Posterior vena cava (tissue), 2 donors: ENCODE measurements at regions of chr10 and their contacts with region 1.

Region 1: GRCh38 chr10:103244663-103245271 is 920 bp upstream of the RPEL1 start:
- DNase-seq: no peak

Region 2: GRCh38 chr10:103080891-103081581 is 163.7 kb before region 1 on chr10:
- intact Hi-C with region 1: loop called in 1 of 2 experiments (anchors 10 kb)
- DNase-seq: no peak

Region 3: GRCh38 chr10:103192451-103193106 is 52.2 kb before region 1 on chr10:
- intact Hi-C with region 1: loop called in 1 of 2 experiments (anchors 10 kb)
- DNase-seq: peak; percentile 96